ENCODE measurements at regions of chr1 and their contacts with region 1.

Region 1: GRCh38 chr1:246012341-246012740 is 494.7 kb downstream of the SMYD3 start:
- DNase-seq: peak; percentile 27
- ATAC-seq: peak; percentile 48
- H3K4me3 ChIP-seq: no peak overlapping the region
- H3K27ac ChIP-seq: no peak overlapping the region
- H3K4me1 ChIP-seq: no peaks in the 10 kb centered on the region
- H3K27me3 ChIP-seq: no peaks in the 10 kb centered on the region
- CTCF ChIP-seq: peak; percentile 72

Region 2: DNA sequence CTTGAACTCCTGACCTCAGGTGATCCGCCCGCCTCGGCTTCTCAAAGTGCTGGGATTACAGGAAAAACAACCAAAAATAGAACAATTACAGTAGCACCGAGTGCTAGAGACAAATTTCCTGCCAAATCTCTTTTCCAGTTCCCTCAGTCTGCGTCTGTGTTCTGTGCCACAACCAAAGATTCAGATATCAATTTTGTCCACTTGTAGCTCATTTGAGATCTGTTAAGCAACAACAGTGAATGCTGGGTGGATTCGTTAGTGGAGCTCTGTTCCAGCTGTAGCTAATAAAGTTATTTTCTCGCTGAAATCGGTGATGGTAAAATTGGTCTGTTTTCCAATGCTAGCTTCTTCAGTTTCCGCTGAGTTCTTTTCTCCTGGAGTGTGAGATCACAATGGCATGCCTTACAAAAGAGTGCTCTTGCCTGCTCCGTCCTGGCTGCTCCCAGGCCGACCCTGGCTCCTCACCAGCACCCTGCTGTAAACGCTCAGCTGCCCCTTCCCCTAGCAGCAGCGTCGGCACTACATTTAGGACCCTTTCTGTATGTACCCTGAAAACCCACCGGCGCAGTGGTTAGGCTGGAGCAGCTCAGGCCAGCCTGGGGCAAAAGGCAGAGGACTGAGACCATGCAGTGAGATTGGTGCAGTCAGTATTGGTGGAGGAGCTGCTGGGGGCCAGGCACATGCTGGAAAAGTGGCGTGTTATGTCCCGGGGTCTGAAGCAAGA is 462.2 kb before region 1 on chr1:
- CTCF ChIA-PET with region 1: interaction called, 10 read pairs
- POLR2A ChIA-PET with region 1: no interaction called
- in situ Hi-C with region 1: no loop called
- intact Hi-C with region 1: no loop called
- DNase-seq: no peak
- ATAC-seq: no peak
- H3K4me3 ChIP-seq: no peak overlapping the region
- H3K27ac ChIP-seq: no peak overlapping the region
- H3K4me1 ChIP-seq: no peaks in the 10 kb centered on the region
- H3K27me3 ChIP-seq: peaks cover 12% of the 10 kb centered on the region
- CTCF ChIP-seq: no peak

Region 3: GRCh38 chr1:245986404-245987220 is 25.7 kb before region 1 on chr1:
- CTCF ChIA-PET with region 1: no interaction called
- POLR2A ChIA-PET with region 1: no interaction called
- in situ Hi-C with region 1: no loop called
- intact Hi-C with region 1: no loop called
- DNase-seq: peak; percentile 45
- ATAC-seq: peak; percentile 93
- H3K4me3 ChIP-seq: no peak overlapping the region
- H3K27ac ChIP-seq: peak overlapping the region; percentile 73
- H3K4me1 ChIP-seq: peaks cover 22% of the 10 kb centered on the region
- H3K27me3 ChIP-seq: no peaks in the 10 kb centered on the region
- CTCF ChIP-seq: no peak

Region 4: DNA sequence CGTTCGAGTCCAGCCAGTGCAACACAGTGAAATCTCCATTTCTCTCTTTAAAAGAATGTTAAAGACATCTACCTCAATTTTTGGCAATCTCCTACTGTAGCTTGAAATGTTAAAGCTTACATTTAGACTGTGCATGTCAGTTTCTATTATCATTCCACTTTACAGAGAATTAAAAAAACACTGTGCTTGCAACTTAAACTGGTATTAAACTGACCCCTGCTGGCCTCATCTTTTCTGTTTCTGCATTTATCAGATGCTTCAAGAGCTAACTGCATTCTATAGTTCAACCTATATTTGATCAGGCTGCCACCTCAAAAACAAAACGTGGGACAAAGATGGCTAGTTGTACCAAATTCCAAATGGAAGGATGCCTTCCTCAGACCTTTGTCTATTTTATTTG is 268.2 kb after region 1 on chr1:
- CTCF ChIA-PET with region 1: no interaction called
- POLR2A ChIA-PET with region 1: no interaction called
- in situ Hi-C with region 1: no loop called
- intact Hi-C with region 1: loop called (anchors 5 kb)
- DNase-seq: no peak
- ATAC-seq: no peak
- H3K4me3 ChIP-seq: no peak overlapping the region
- H3K27ac ChIP-seq: no peak overlapping the region
- H3K4me1 ChIP-seq: no peaks in the 10 kb centered on the region
- H3K27me3 ChIP-seq: no peaks in the 10 kb centered on the region
- CTCF ChIP-seq: peak; percentile 42; the same call in 1 of the 2 replicates

Region 5: DNA sequence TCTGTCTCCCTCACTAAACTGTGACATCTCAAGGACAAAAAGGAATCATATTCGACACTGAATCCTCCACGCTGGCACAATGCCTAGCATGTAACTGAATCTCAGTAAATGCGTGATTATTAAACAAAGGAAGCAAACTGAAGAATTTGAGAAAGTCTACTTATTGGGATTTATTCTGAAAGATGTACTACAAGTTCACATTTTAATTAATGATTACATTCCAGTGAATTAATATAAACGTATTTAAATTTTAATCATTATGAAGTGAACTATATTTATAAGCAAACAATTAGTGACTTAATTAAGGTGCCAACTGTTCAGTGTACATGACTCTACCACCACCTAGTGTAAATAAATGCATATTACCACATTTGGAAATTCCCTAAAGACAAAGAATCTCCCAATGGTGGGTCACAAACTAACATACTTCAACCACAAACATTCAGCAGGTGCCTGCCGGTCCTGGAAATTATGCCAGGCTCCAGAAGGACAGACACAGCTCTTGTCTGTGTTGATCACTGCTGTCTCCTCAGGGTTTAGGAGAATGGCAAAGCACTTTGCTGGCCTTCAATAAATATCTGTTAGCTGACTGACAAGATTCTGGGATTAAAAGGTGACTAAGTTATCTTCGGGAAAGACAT is 438.4 kb after region 1 on chr1:
- CTCF ChIA-PET with region 1: no interaction called
- POLR2A ChIA-PET with region 1: no interaction called
- in situ Hi-C with region 1: no loop called
- intact Hi-C with region 1: loop called (anchors 2 kb)
- DNase-seq: peak; percentile 7
- ATAC-seq: peak; percentile 71; the same call in 1 of the 2 replicates
- H3K4me3 ChIP-seq: no peak overlapping the region
- H3K27ac ChIP-seq: no peak overlapping the region
- H3K4me1 ChIP-seq: no peaks in the 10 kb centered on the region
- H3K27me3 ChIP-seq: no peaks in the 10 kb centered on the region
- CTCF ChIP-seq: peak; percentile 81

Region 6: DNA sequence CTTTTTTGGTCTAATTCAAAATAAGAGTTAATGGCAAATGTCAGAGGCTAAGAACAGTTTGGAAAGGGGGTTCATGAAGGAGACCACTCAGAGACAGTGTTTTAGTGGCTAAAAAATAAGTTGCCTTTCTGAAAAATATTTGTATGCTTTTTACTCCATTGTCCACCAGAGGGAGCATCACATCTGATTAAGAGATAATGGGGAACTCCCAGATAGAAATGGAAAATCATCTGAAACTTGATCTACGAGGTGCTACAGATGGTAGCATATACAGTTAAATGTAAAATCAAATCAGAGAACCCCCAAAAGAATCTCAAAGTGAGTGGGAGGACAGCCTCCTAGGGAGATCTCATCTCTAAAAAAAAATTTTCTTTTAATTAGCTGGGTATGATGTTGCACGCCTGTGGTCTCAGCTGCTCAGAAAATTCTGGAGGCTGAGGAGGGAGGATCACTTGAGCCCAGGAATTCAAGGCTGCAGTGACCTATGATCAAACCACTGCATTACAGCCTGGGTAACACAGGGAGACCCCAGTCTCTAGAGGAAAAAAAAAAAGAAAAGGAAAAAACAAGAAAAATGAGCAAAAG is 485.1 kb after region 1 on chr1:
- CTCF ChIA-PET with region 1: interaction called, 3 read pairs
- POLR2A ChIA-PET with region 1: no interaction called
- in situ Hi-C with region 1: no loop called
- intact Hi-C with region 1: loop called (anchors 2 kb)
- DNase-seq: peak; percentile 48
- ATAC-seq: peak; percentile 52; the same call in 1 of the 2 replicates
- H3K4me3 ChIP-seq: no peak overlapping the region
- H3K27ac ChIP-seq: no peak overlapping the region
- H3K4me1 ChIP-seq: no peaks in the 10 kb centered on the region
- H3K27me3 ChIP-seq: no peaks in the 10 kb centered on the region
- CTCF ChIP-seq: peak; percentile 76